ENCODE measurements at regions of chr6 and their contacts with region 1.

Region 1: DNA sequence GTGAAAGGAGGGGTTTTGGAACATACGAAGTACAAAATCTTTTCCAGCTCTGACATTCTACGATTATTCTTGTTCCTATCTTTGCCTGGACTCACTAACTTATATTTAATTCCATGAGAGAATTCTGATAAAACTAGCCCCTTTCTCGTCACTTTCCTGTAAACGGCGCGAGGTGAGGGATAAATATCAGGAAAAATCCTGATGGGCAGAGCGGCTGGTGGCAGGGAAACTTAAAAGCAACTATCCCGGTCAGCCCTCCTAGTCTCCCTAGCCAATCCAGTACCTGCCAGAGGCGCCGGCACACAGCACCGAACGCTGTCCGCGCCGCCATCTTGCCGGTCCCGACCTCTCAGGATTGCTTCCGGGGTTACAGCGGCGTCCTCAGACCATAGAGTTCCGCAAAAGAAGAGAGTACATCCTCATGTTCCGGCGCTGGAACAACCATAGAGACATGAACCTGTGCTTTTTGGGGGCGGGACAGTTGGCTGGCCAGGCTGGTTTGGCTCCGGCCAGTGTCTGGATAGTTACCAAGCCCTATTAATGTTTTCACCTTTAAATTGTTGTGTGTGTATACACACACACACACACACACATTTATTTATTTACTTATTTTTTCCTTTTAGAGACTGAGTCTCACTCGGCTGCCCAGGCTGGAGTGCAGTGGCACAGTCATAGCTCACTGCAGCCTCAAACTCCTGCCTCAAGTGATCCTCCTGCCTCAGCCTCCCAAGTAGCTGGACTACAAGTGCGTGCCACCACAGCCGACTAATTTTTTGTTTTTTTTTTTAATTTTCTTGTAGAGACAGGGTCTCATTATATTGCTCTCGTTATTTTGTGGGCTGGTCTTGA is at the start of gene MRPS10:
- H3K4me3 ChIP-seq: peak within 1 kb of the TSS; percentile 60
- H3K27ac ChIP-seq: peak within 1 kb of the TSS; percentile 79
- H3K4me1 ChIP-seq: peaks cover 3% of the 10 kb centered on the region; the same call in 1 of the 2 replicates
- CTCF ChIP-seq: no peak

Region 2: GRCh38 chr6:42075159-42075838 is 142.4 kb before region 1 on chr6:
- CTCF ChIA-PET with region 1: interaction called, 57 read pairs
- POLR2A ChIA-PET with region 1: interaction called, 5 read pairs
- H3K4me3 ChIP-seq: no peak overlapping the region
- H3K27ac ChIP-seq: no peak overlapping the region
- H3K4me1 ChIP-seq: no peaks in the 10 kb centered on the region
- CTCF ChIP-seq: peak; percentile 62

Region 3: GRCh38 chr6:42166444-42167141 is 51.1 kb before region 1 on chr6:
- CTCF ChIA-PET with region 1: interaction called, 46 read pairs
- POLR2A ChIA-PET with region 1: no interaction called
- H3K4me3 ChIP-seq: no peak overlapping the region
- H3K27ac ChIP-seq: no peak overlapping the region
- H3K4me1 ChIP-seq: no peaks in the 10 kb centered on the region
- CTCF ChIP-seq: peak; percentile 86

Region 4: GRCh38 chr6:42193491-42193894 is 24.2 kb before region 1 on chr6:
- CTCF ChIA-PET with region 1: interaction called, 39 read pairs
- POLR2A ChIA-PET with region 1: no interaction called
- H3K4me3 ChIP-seq: no peak overlapping the region; the same call in 1 of the 2 replicates
- H3K27ac ChIP-seq: no peak overlapping the region
- H3K4me1 ChIP-seq: peaks cover 11% of the 10 kb centered on the region; the same call in 1 of the 2 replicates
- CTCF ChIP-seq: no peak